Activated CD8-positive, alpha-beta memory T cell treated with anti-CD3 and anti-CD28 coated beads, Interleukin-2, amount 10 ng/mL, durations not matched to agents 7 days and 5 days (primary cell): ENCODE measurements at regions of chr3 and their contacts with region 1.

Region 1: DNA sequence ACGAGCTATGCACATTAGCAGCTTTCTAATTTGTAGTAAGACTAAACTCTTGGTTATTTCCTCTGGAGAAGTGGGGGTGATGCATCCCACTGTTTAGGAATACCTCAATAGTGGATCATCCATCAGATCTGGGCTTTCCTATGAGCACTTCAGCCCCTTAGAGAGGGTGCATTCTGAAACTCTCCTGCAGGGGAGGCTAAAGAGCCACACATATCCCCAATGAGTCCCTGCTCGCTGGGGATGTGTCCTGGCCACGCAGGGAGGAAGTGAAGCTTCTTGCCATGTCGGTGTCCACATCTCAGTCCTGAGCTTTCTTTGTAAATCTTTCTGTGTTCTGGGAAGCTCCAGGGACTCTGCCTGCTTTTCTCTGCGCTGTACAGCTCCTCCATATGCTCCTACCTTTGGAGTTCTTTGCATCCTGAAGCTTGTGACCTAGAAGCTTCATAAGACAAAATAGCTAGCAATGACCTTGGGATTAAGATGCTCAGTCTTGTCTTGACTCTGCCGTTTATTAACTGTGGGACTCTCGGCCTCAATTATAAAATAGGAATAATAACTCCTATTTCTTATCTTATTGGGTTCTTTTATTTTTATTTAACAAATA is 28.3 kb upstream of the MASP1 start:
- DNase-seq: peak; percentile 79
- ATAC-seq: peak; percentile 83
- H3K4me3 Mint-ChIP-seq: no peak overlapping the region
- H3K27ac Mint-ChIP-seq: no peak overlapping the region
- H3K4me1 Mint-ChIP-seq: peaks cover 19% of the 10 kb centered on the region
- H3K27me3 Mint-ChIP-seq: peaks cover 32% of the 10 kb centered on the region

Region 2: DNA sequence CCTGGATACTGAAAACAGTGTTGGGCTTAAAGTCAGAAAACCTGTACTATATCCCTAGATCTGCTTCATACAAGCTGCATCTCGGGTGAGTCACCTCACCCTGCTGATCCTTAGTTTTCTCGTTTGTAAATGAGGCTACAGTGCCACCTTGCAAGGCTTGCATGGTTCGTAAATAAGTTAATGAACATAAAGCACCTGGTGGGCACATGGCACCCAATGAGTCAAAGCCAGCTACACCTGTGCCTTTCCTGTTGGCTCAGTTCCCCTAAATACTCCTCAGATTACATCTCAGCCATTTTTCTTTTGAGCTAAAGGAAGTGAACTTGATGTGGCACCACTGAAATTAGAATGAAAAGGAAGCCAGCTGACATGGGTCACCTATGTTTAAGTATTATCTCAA is 96.0 kb before region 1 on chr3:
- CTCF ChIA-PET with region 1: interaction called, 13 read pairs
- DNase-seq: no peak
- ATAC-seq: no peak
- H3K4me3 Mint-ChIP-seq: no peak overlapping the region
- H3K27ac Mint-ChIP-seq: no peak overlapping the region
- H3K4me1 Mint-ChIP-seq: no peaks in the 10 kb centered on the region
- H3K27me3 Mint-ChIP-seq: peaks cover 7% of the 10 kb centered on the region

Region 3: GRCh38 chr3:187274977-187275338 is 44.8 kb before region 1 on chr3:
- CTCF ChIA-PET with region 1: no interaction called
- DNase-seq: no peak
- ATAC-seq: no peak
- H3K4me3 Mint-ChIP-seq: no peak overlapping the region
- H3K27ac Mint-ChIP-seq: no peak overlapping the region
- H3K4me1 Mint-ChIP-seq: no peaks in the 10 kb centered on the region
- H3K27me3 Mint-ChIP-seq: peaks cover 35% of the 10 kb centered on the region

Region 4: DNA sequence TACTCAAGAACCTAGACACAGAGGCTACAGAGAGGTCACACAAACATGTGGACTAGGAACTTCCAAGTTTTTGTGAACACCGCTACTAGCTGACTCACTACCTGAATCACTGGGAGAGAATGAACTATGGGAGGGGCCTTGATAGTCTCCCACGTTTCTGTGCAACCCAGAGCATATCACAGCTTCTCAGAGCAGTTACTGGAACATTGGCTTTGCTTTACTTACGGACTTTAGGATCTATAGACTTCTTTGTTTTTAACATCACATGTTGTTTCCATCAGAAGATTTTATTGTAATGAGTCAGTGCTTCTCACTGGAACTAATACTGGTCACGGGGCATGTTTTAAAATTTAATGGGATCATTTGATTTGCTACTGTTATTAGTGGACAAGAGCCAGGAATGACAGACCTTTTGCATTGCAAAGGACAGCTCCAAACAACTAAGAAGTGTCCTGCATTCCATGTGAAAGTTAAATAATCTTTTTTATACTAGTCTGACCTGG is 84.0 kb after region 1 on chr3:
- CTCF ChIA-PET with region 1: interaction called, 10 read pairs
- DNase-seq: no peak
- ATAC-seq: no peak
- H3K4me3 Mint-ChIP-seq: no peak overlapping the region
- H3K27ac Mint-ChIP-seq: no peak overlapping the region
- H3K4me1 Mint-ChIP-seq: no peaks in the 10 kb centered on the region
- H3K27me3 Mint-ChIP-seq: peaks cover 26% of the 10 kb centered on the region

Region 5: GRCh38 chr3:187669675-187670504 is 350.1 kb after region 1 on chr3 and contains the start of gene SST:
- CTCF ChIA-PET with region 1: interaction called, 16 read pairs
- DNase-seq: peak; percentile 49
- ATAC-seq: peak; percentile 49
- H3K4me3 Mint-ChIP-seq: no peak within 1 kb of the TSS
- H3K27ac Mint-ChIP-seq: no peak within 1 kb of the TSS
- H3K4me1 Mint-ChIP-seq: no peaks in the 10 kb centered on the region
- H3K27me3 Mint-ChIP-seq: peaks cover 81% of the 10 kb centered on the region
- total RNA-seq, gene SST: not detected

Region 6: GRCh38 chr3:187709155-187709554 is 389.4 kb after region 1 on chr3:
- CTCF ChIA-PET with region 1: interaction called, 69 read pairs
- DNase-seq: no peak
- ATAC-seq: no peak
- H3K4me3 Mint-ChIP-seq: no peak overlapping the region
- H3K27ac Mint-ChIP-seq: no peak overlapping the region
- H3K4me1 Mint-ChIP-seq: peaks cover 11% of the 10 kb centered on the region
- H3K27me3 Mint-ChIP-seq: peaks cover 2% of the 10 kb centered on the region